Ascending aorta (tissue), 2 donors: ENCODE measurements at regions of chr14 and their contacts with region 1.

Region 1: DNA sequence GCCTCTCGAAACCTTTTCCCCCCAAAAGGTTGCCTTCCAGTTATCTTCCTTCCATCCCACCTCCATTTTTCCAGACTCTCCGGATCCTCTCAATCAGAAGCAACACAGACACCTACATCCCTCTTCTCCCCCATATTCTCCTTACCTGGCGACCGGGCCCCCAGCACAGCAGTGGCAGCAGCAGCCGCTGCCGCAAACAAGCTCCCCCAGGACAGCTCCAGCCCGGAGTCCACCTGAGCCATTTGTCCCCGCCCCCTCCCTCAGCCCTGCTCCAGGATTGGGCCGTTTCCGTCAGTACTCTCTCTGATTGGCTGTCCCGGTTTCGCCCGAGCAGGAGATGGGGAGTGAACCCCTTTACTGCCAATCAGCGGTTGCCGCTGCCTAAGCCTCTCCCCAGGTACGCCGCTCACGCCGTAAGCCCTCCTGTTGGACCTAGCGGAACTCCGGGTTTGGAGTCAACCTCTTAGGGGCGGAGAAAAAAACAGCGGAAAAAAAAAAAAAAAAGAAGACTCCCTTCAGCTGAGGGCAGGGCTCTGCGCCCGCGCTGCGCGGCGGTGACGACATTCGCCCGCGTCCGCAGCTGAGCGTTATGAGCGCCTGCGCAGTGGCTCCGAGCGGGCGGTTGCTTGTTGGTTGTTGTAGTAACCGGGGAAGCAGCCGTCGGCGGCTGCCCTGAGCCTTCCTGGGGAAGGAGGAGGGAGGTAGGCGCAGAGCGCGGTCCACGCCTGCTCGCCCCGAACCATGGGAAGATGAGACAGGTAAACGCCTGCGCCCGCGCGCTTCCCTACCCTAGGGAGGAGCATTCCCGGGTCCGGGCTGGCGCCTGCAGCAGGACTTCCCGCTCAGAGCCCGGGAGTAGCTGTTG is at the starts of genes ERG28 and TTLL5:
- DNase-seq: peak; percentile 94 to 98
- H3K4me3 ChIP-seq: peak within 1 kb of the TSS; percentile 74 to 100
- H3K27ac ChIP-seq: peak within 1 kb of the TSS; percentile 78 to 87
- H3K4me1 ChIP-seq: peaks cover 4 to 6% of the 10 kb centered on the region in 2 donors
- H3K27me3 ChIP-seq: no peaks in the 10 kb centered on the region
- CTCF ChIP-seq: no peak
- total RNA-seq, gene ERG28: 2.3 TPM
- total RNA-seq, gene TTLL5: 43.1 TPM

Region 2: GRCh38 chr14:75689012-75689411 is 28.1 kb after region 1 on chr14:
- intact Hi-C with region 1: no loop called
- DNase-seq: no peak
- H3K4me3 ChIP-seq: no peak overlapping the region
- H3K27ac ChIP-seq: no peak overlapping the region
- H3K4me1 ChIP-seq: no peaks in the 10 kb centered on the region
- H3K27me3 ChIP-seq: no peaks in the 10 kb centered on the region
- CTCF ChIP-seq: no peak

Region 3: DNA sequence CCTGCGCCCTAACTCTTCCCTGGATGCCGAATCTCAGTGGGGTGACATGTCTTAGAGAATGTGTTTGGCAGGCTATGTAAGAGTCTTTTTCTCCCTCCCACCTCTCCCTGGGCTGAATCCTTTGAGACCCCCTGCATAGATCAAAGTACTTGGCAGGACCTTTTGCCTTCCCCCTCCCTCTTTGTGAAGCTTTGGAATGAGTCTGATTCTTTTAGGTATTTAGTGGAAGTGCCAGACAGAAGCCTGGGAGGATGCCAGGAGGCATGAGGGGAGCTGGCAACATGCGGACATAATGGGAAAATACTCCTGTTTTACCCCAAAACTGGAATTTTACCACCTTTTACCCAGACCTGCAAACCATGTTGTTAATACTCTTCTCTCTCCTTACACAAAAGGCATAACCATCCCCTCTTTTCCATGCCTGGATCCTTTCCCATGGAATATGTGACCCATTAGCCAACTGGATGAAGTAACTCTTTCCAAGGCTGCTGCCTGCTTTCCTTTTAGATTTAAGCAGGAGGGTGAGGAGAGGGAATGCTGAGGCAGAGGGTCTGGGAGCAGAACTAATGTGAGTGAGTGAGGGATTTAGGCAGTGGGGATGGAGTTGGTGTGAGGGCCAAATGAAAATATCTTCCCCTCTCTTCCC is 41.9 kb after region 1 on chr14:
- intact Hi-C with region 1: loop called (anchors 1 kb)
- DNase-seq: no peak
- H3K4me3 ChIP-seq: peak overlapping the region in 1 of 2 donors; percentile 2
- H3K27ac ChIP-seq: peak overlapping the region; percentile 67 to 75
- H3K4me1 ChIP-seq: no peaks in the 10 kb centered on the region
- H3K27me3 ChIP-seq: no peaks in the 10 kb centered on the region
- CTCF ChIP-seq: no peak

Region 4: DNA sequence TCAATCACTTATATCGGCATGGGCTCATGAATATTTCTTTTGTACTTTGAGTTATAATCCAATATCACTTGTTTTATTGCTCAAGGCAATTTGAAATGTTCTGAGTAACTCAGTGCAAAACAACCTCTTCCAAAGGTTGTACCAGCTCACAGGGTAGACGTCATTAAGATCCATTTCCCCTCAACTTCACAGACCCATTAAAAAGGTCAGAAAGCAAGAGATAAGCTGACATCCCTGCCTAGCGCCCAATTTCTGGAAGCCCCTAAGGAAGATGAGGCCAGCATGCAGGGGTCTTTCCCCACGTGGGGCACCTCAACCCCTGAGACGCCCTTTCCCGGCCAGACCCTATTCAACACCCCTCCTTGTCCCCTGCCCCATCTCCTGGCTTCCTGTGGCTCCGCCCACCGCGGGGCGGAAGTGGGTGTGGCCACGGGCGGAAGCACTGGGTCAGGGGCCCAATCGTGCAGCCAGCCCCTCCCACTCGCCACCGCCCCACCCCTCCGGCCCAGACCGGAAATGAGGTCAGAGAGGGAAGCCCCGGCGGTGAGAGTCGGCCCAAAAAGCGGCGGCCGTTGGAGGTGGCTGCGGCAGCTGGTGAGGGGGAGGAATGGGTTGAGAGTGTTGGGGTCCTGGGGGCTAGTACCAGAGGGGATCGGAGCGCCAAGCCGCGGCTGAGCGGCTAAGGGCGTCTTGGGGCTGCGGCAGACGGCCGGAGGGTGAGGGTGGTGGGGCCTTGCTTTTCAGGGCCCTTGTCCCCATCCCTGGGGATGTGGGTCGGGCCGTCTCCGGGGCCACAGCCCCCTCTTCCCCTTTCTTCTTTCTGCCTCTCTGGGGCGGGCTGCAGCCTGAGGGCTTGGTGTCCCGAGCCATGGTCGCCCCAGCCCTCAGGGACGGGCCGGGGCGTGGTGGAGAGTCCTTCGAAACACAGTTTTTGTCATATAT is 490.8 kb after region 1 on chr14 and contains the start of gene GPATCH2L:
- intact Hi-C with region 1: loop called (anchors 5 kb)
- DNase-seq: peak; percentile 85 to 98
- H3K4me3 ChIP-seq: peak within 1 kb of the TSS; percentile 91 to 96
- H3K27ac ChIP-seq: peak within 1 kb of the TSS; percentile 83 to 87
- H3K4me1 ChIP-seq: peaks cover 8 to 27% of the 10 kb centered on the region in 2 donors
- H3K27me3 ChIP-seq: no peaks in the 10 kb centered on the region
- CTCF ChIP-seq: no peak
- total RNA-seq, gene GPATCH2L: 40.3 TPM